ENCODE measurements at regions of chr10 and their contacts with region 1.

Region 1: GRCh38 chr10:132458593-132459300 is 61.7 kb downstream of the PWWP2B start:
- DNase-seq: no peak
- H3K4me3 ChIP-seq: no peak overlapping the region
- H3K27ac ChIP-seq: no peak overlapping the region
- H3K27me3 ChIP-seq: peaks cover 26% of the 10 kb centered on the region
- CTCF ChIP-seq: peak; percentile 79

Region 2: GRCh38 chr10:132540456-132540855 is 81.7 kb after region 1 on chr10:
- CTCF ChIA-PET with region 1: interaction called, 10 read pairs
- POLR2A ChIA-PET with region 1: no interaction called
- DNase-seq: no peak
- H3K4me3 ChIP-seq: peak overlapping the region; percentile 42
- H3K27ac ChIP-seq: no peak overlapping the region
- H3K27me3 ChIP-seq: no peaks in the 10 kb centered on the region
- CTCF ChIP-seq: peak; percentile 38

Region 3: GRCh38 chr10:132637477-132638129 is 178.9 kb after region 1 on chr10:
- CTCF ChIA-PET with region 1: interaction called, 29 read pairs
- POLR2A ChIA-PET with region 1: interaction called, 3 read pairs
- DNase-seq: peak; percentile 41
- H3K4me3 ChIP-seq: no peak overlapping the region
- H3K27ac ChIP-seq: no peak overlapping the region
- H3K27me3 ChIP-seq: no peaks in the 10 kb centered on the region
- CTCF ChIP-seq: peak; percentile 79